ENCODE measurements at regions of chr11 and their contacts with region 1.

Region 1: GRCh38 chr11:18243783-18244362 is 4.6 kb downstream of the SAA2 start:
- DNase-seq: peak in 8 of 9 donors; percentile 15 to 63 (median 50)
- ATAC-seq: peak; percentile 80
- H3K4me3 ChIP-seq: no peak overlapping the region
- H3K4me3 Mint-ChIP-seq: no peak overlapping the region
- H3K27ac ChIP-seq: no peak overlapping the region
- H3K27ac Mint-ChIP-seq: no peak overlapping the region
- H3K4me1 ChIP-seq: no peaks in the 10 kb centered on the region
- H3K4me1 Mint-ChIP-seq: peaks cover 0 to 32% (median 0%) of the 10 kb centered on the region in 7 donors
- H3K27me3 ChIP-seq: no peaks in the 10 kb centered on the region
- H3K27me3 Mint-ChIP-seq: peaks cover 6 to 37% (median 16%) of the 10 kb centered on the region in 5 donors

Region 2: GRCh38 chr11:18731949-18732821 is 488.3 kb after region 1 on chr11:
- CTCF ChIA-PET with region 1: interaction called, 4 read pairs
- POLR2A ChIA-PET with region 1: no interaction called
- intact Hi-C with region 1: loop called in 1 of 2 experiments (anchors 5 kb)
- DNase-seq: peak; percentile 44 to 81 (median 65)
- ATAC-seq: peak; percentile 79
- H3K4me3 ChIP-seq: no peak overlapping the region
- H3K4me3 Mint-ChIP-seq: no peak overlapping the region
- H3K27ac ChIP-seq: no peak overlapping the region
- H3K27ac Mint-ChIP-seq: peak overlapping the region in 1 of 9 donors; percentile 32
- H3K4me1 ChIP-seq: peaks cover 5 to 6% of the 10 kb centered on the region in 2 donors
- H3K4me1 Mint-ChIP-seq: peaks cover 4 to 15% (median 13%) of the 10 kb centered on the region in 7 donors
- H3K27me3 ChIP-seq: no peaks in the 10 kb centered on the region
- H3K27me3 Mint-ChIP-seq: peaks cover 0 to 9% (median 0%) of the 10 kb centered on the region in 5 donors

Region 3: GRCh38 chr11:18768472-18768901 is 524.6 kb after region 1 on chr11:
- CTCF ChIA-PET with region 1: interaction called, 3 read pairs
- POLR2A ChIA-PET with region 1: no interaction called
- intact Hi-C with region 1: loop called (anchors 1 kb)
- DNase-seq: no peak
- ATAC-seq: no peak
- H3K4me3 ChIP-seq: no peak overlapping the region
- H3K4me3 Mint-ChIP-seq: no peak overlapping the region
- H3K27ac ChIP-seq: no peak overlapping the region
- H3K27ac Mint-ChIP-seq: no peak overlapping the region
- H3K4me1 ChIP-seq: no peaks in the 10 kb centered on the region
- H3K4me1 Mint-ChIP-seq: peaks cover 0 to 28% (median 0%) of the 10 kb centered on the region in 7 donors
- H3K27me3 ChIP-seq: no peaks in the 10 kb centered on the region
- H3K27me3 Mint-ChIP-seq: peaks cover 4 to 27% (median 16%) of the 10 kb centered on the region in 5 donors